Ovary (tissue), 10 donors: ENCODE measurements at regions of chr12 and their contacts with region 1.

Region 1: GRCh38 chr12:13100882-13101769 is 2.3 kb downstream of the GSG1 start:
- DNase-seq: peak; percentile 79 to 93 (median 89)
- H3K4me3 ChIP-seq: peak overlapping the region; percentile 45
- H3K27ac ChIP-seq: peak overlapping the region; percentile 69 to 94
- H3K4me1 ChIP-seq: peaks cover 4% of the 10 kb centered on the region
- H3K27me3 ChIP-seq: no peaks in the 10 kb centered on the region
- CTCF ChIP-seq: peak in 2 of 3 donors; percentile 16 to 20
- EP300 ChIP-seq: peak; percentile 70
- POLR2A ChIP-seq: peak; percentile 27

Region 2: GRCh38 chr12:12786716-12787601 is 314.2 kb before region 1 on chr12:
- intact Hi-C with region 1: loop called in 1 of 4 experiments (anchors 5 kb)
- DNase-seq: peak; percentile 84 to 92 (median 89)
- H3K4me3 ChIP-seq: peak overlapping the region; percentile 61
- H3K27ac ChIP-seq: peak overlapping the region; percentile 86 to 95
- H3K4me1 ChIP-seq: peaks cover 10% of the 10 kb centered on the region
- H3K27me3 ChIP-seq: no peaks in the 10 kb centered on the region
- CTCF ChIP-seq: peak in 2 of 3 donors; percentile 40 to 66
- EP300 ChIP-seq: no peak
- POLR2A ChIP-seq: peak; percentile 71

Region 3: GRCh38 chr12:12909228-12909994 is 191.7 kb before region 1 on chr12:
- intact Hi-C with region 1: loop called in 2 of 4 experiments (anchors 5 to 10 kb)
- DNase-seq: no peak
- H3K4me3 ChIP-seq: no peak overlapping the region
- H3K27ac ChIP-seq: peak overlapping the region; percentile 57 to 84
- H3K4me1 ChIP-seq: peaks cover 10% of the 10 kb centered on the region
- H3K27me3 ChIP-seq: no peaks in the 10 kb centered on the region
- CTCF ChIP-seq: no peak
- EP300 ChIP-seq: no peak
- POLR2A ChIP-seq: no peak

Region 4: DNA sequence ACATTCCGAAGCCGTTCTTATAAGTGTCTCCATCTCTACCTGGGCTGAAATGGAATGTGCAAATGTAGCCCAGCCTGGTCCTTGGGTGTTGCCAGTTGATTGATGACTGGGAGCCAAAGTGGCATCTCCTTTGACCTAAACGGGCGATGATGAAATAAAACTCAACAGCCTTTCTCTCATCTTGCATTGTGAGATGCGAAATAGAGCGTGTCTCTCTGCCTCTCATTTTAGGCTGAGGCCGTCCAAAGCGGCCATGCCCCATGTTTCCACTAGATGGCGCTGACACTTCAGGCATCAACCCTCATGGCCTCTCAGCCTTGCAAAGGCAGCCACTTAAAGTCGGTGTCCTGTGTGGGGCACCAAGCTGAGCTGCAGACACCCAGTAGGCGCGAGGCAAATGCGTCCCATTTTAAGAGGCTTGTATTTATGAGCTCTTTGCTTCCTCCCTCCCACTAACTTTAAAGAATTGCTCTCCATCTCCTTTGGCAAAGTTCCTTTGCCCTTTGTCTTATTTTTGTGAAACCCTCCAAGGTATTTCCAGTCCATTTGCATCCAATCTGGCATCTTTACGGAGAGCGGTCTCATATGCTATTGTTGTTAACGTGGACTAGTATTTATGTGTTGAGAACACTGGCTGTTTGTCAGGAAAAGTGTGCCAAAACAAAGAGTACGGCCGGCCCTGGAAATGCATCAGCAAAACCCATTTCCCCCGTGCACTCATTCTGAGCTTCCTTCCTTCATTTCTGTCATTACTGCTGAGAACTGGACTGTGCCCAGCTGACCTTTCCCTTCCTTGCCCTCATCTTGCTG is 184.8 kb before region 1 on chr12:
- intact Hi-C with region 1: loop called in 2 of 4 experiments (anchors 5 to 10 kb)
- DNase-seq: peak; percentile 81 to 92 (median 90)
- H3K4me3 ChIP-seq: no peak overlapping the region
- H3K27ac ChIP-seq: peak overlapping the region; percentile 45 to 49
- H3K4me1 ChIP-seq: peaks cover 13% of the 10 kb centered on the region
- H3K27me3 ChIP-seq: no peaks in the 10 kb centered on the region
- CTCF ChIP-seq: peak; percentile 92 to 98 (median 94)
- EP300 ChIP-seq: no peak
- POLR2A ChIP-seq: no peak

Region 5: GRCh38 chr12:13196130-13196921 is 95.2 kb after region 1 on chr12 and contains the start of gene EMP1:
- intact Hi-C with region 1: loop called in 1 of 4 experiments (anchors 10 kb)
- DNase-seq: peak; percentile 89 to 98 (median 92)
- H3K4me3 ChIP-seq: peak within 1 kb of the TSS; percentile 52
- H3K27ac ChIP-seq: peak within 1 kb of the TSS; percentile 60 to 82
- H3K4me1 ChIP-seq: peaks cover 3% of the 10 kb centered on the region
- H3K27me3 ChIP-seq: no peaks in the 10 kb centered on the region
- CTCF ChIP-seq: no peak
- EP300 ChIP-seq: no peak
- POLR2A ChIP-seq: peak; percentile 73
- total RNA-seq, gene EMP1: 30.5 to 113 (median 64.1) TPM

Region 6: GRCh38 chr12:13316587-13317246 is 215.6 kb after region 1 on chr12:
- intact Hi-C with region 1: no loop called
- DNase-seq: no peak
- H3K4me3 ChIP-seq: no peak overlapping the region
- H3K27ac ChIP-seq: no peak overlapping the region
- H3K4me1 ChIP-seq: no peaks in the 10 kb centered on the region
- H3K27me3 ChIP-seq: no peaks in the 10 kb centered on the region
- CTCF ChIP-seq: no peak
- EP300 ChIP-seq: no peak
- POLR2A ChIP-seq: no peak